ENCODE measurements at regions of chr10 and their contacts with region 1.

Region 1: DNA sequence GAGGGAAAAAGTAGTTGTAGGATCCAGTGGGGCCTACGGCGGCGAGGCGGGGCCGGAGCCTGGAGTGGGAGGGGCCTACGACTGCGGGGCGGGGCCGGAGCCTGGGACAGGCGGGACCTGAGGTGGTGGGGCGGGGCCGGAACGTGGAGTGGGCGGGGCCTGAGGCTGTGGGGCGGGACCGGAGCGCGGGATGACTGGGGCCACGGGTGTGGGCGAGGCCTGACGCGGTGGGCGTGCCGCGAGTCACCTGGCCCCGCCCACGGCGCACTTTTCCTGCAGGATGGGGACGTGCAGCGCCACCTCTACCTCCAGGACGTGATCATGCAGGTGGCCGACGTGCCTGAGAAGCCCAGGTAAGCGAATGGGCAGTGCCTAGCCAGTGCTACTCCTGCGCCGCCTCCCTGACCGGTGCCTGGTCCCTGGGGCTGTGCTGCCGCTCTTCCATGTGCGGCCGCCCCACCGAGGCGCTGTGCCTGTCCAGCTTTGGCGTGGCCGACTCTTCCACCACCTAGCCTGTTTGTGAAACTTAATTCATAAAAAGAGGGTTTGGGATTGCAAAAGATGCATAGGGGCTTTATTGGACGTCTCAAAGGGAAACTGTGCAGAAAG is 501 bp downstream of the ZNF511 start:
- DNase-seq: peak; percentile 93
- H3K4me3 ChIP-seq: peak overlapping the region; percentile 84 to 96 (median 88)
- H3K27ac ChIP-seq: peak overlapping the region; percentile 99
- H3K4me1 ChIP-seq: peaks cover 18% of the 10 kb centered on the region
- H3K27me3 ChIP-seq: no peaks in the 10 kb centered on the region
- CTCF ChIP-seq: peak in 1 of 2 donors; percentile 22

Region 2: DNA sequence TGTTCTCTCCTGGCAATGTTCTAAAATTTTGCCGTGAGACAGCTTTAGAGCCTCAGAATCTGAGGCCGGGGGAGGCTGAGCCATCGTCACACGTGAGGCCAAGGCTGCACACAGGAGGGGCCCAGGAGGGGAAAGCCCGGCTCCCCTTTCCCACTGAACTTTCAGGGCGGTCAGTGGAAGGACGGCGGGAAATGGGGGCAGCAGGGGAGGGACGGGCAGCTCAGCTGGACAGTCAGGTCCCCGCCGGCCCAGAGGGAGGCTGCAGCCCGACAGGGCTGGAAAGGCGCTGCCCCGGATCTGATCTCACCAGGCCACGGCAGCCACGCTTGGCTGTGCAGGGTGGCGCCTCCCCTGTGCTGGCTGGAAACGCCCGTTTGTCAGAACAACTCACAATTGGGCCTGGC is 264.8 kb before region 1 on chr10:
- CTCF ChIA-PET with region 1: no interaction called
- dilution Hi-C with region 1: no loop called
- in situ Hi-C with region 1: no loop called
- intact Hi-C with region 1: no loop called
- DNase-seq: no peak
- H3K4me3 ChIP-seq: no peak overlapping the region
- H3K27ac ChIP-seq: no peak overlapping the region
- H3K4me1 ChIP-seq: no peaks in the 10 kb centered on the region
- H3K27me3 ChIP-seq: no peaks in the 10 kb centered on the region
- CTCF ChIP-seq: no peak

Region 3: DNA sequence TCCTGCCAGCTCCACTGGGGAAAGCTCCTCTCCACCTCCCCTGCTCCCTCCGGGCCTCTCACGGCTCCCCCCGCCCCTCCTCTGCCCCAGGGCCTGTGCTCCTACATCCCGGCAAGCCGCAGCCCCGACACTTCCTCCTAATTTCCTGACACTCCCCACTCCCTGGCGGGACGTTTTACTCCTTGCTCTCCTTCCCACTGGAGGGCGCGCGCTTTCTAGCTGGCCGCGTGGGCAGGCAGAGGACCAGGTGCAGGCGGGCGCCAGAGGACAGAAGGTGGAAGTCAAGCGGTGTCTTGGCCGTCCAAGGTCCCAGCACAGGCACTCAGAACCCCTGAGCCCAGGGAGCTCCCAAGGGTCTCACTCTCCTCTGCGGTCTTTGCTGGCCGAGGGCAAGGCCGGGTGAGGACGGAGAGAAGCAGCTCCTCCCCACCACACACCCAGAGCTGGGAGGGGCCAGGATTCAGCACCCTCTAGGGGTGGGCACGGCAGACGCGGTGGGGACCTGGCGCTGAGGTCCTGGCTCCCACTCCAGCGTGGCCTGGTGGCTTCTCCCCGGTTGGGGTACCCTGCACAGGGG is 51.6 kb before region 1 on chr10:
- CTCF ChIA-PET with region 1: interaction called, 3 read pairs
- dilution Hi-C with region 1: no loop called
- in situ Hi-C with region 1: no loop called
- intact Hi-C with region 1: loop called (anchors 2 kb)
- DNase-seq: peak; percentile 58
- H3K4me3 ChIP-seq: no peak overlapping the region
- H3K27ac ChIP-seq: peak overlapping the region; percentile 50
- H3K4me1 ChIP-seq: peaks cover 50% of the 10 kb centered on the region
- H3K27me3 ChIP-seq: no peaks in the 10 kb centered on the region
- CTCF ChIP-seq: peak; percentile 36 to 62

Region 4: GRCh38 chr10:133267829-133268228 is 41.4 kb before region 1 on chr10:
- CTCF ChIA-PET with region 1: no interaction called
- dilution Hi-C with region 1: loop called (anchors 5 kb)
- in situ Hi-C with region 1: no loop called
- intact Hi-C with region 1: no loop called
- DNase-seq: no peak
- H3K4me3 ChIP-seq: no peak overlapping the region
- H3K27ac ChIP-seq: no peak overlapping the region
- H3K4me1 ChIP-seq: peaks cover 10% of the 10 kb centered on the region
- H3K27me3 ChIP-seq: no peaks in the 10 kb centered on the region
- CTCF ChIP-seq: no peak

Region 5: GRCh38 chr10:133274698-133275363 is 34.4 kb before region 1 on chr10:
- CTCF ChIA-PET with region 1: no interaction called
- dilution Hi-C with region 1: no loop called
- in situ Hi-C with region 1: no loop called
- intact Hi-C with region 1: loop called (anchors 2 kb)
- DNase-seq: peak; percentile 87
- H3K4me3 ChIP-seq: peak overlapping the region in 1 of 3 experiments; percentile 13
- H3K27ac ChIP-seq: peak overlapping the region; percentile 69
- H3K4me1 ChIP-seq: peaks cover 61% of the 10 kb centered on the region
- H3K27me3 ChIP-seq: no peaks in the 10 kb centered on the region
- CTCF ChIP-seq: no peak

Region 6: GRCh38 chr10:133342942-133343341 is 33.7 kb after region 1 on chr10:
- CTCF ChIA-PET with region 1: no interaction called
- dilution Hi-C with region 1: no loop called
- in situ Hi-C with region 1: no loop called
- intact Hi-C with region 1: no loop called
- DNase-seq: no peak
- H3K4me3 ChIP-seq: no peak overlapping the region
- H3K27ac ChIP-seq: no peak overlapping the region
- H3K4me1 ChIP-seq: peaks cover 12% of the 10 kb centered on the region
- H3K27me3 ChIP-seq: no peaks in the 10 kb centered on the region
- CTCF ChIP-seq: no peak

Region 7: DNA sequence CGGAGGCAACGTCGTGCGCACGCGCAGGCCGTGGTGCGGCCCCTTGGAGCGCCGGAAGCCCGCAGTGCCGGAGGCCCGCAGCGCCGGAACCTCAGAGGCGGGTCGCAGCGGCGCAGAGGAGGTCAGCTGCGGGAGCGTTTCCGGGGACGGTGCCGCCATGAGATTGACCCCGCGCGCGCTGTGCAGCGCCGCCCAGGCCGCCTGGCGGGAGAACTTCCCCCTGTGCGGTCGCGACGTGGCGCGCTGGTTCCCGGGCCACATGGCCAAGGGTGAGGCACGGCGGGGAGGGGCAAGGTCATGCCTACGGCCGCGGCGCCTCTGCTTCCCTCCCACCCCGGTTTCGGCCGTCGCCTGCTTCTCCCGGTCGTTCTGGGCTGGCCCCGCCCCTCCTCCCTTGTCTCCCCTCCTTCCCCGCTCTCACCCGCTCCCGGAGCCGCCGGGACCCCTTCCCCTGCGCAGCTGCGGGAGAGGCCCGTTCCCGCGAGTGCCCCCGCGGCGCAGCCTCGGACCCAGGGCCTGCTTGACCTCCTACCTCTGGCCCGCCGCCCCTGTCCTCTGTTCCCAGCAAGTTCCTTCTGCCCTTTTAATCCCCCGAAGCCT is 84.9 kb after region 1 on chr10 and contains the start of gene MTG1:
- CTCF ChIA-PET with region 1: no interaction called
- dilution Hi-C with region 1: loop called (anchors 10 kb)
- in situ Hi-C with region 1: no loop called
- intact Hi-C with region 1: no loop called
- DNase-seq: peak; percentile 90
- H3K4me3 ChIP-seq: peak within 1 kb of the TSS; percentile 71 to 96 (median 95)
- H3K27ac ChIP-seq: peak within 1 kb of the TSS; percentile 88
- H3K4me1 ChIP-seq: peaks cover 18% of the 10 kb centered on the region
- H3K27me3 ChIP-seq: no peaks in the 10 kb centered on the region
- CTCF ChIP-seq: peak in 1 of 2 donors; percentile 37
- total RNA-seq, gene MTG1: 21.7 to 36.4 TPM

Region 8: GRCh38 chr10:133438711-133439273 is 129.6 kb after region 1 on chr10:
- CTCF ChIA-PET with region 1: interaction called, 10 read pairs
- dilution Hi-C with region 1: no loop called
- in situ Hi-C with region 1: no loop called
- intact Hi-C with region 1: no loop called
- DNase-seq: peak; percentile 24
- H3K4me3 ChIP-seq: no peak overlapping the region
- H3K27ac ChIP-seq: no peak overlapping the region
- H3K4me1 ChIP-seq: no peaks in the 10 kb centered on the region
- H3K27me3 ChIP-seq: no peaks in the 10 kb centered on the region
- CTCF ChIP-seq: peak; percentile 26 to 46

Measured in mammary epithelial cell (primary cell).